ENCODE measurements at regions of chr4 and their contacts with region 1.

Region 1: DNA sequence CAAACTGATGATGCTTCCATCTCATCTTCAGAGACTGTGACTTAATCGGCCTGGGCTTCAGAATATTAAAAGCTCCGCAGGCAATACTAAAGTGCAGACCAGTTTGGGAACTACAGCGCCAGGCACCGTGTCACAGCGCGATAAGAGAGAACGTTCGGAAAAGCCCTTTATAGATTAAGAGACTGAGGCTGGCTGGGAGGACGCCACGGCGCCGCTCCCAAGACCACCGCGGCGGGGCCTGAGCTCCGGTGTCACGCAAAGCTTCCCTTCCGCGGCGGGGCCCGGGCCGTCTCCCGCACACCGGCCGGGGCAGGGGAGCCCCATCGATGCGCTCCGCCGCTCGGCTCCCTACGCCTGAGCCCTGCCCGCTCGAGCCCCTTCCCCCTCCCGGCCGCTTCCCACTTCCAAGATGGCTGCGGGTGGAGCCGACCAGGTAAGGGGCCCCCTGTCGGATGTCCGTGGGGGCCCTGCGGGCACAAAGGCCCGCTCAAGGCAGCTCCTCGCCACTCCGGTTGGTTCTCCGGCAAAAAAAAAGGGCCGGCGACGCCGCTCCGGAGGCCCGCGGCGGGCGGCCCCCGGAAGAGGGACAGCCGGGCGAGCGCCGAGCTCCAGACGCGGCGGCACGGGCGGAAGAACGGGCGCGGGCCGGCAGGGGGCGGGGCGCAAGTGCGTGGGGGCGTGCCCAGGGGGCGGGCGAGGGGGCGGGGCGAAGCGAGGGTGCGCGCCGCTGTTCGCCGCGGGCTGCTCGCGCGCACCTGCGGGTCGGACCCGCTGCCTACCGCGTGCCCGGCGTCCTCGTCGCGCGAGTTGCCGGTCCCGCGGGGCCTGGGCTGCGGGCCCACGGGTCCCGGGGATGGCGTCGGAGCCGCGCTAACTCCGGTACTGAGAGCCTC is at the start of gene TBC1D14:
- DNase-seq: peak; percentile 87
- H3K4me3 Mint-ChIP-seq: peak within 1 kb of the TSS; percentile 91
- H3K27ac Mint-ChIP-seq: peak within 1 kb of the TSS; percentile 77
- H3K4me1 Mint-ChIP-seq: peaks cover 29% of the 10 kb centered on the region
- H3K27me3 Mint-ChIP-seq: no peaks in the 10 kb centered on the region
- CTCF ChIP-seq: no peak
- total RNA-seq, gene TBC1D14: 52.6 and 55.1 TPM in 2 replicates

Region 2: GRCh38 chr4:6942238-6942800 is 33.0 kb after region 1 on chr4:
- CTCF ChIA-PET with region 1: interaction called, 6 read pairs
- POLR2A ChIA-PET with region 1: interaction called, 10 read pairs
- intact Hi-C with region 1: no loop called
- DNase-seq: peak; percentile 86
- H3K4me3 Mint-ChIP-seq: peak overlapping the region; percentile 49
- H3K27ac Mint-ChIP-seq: peak overlapping the region; percentile 95
- H3K4me1 Mint-ChIP-seq: peaks cover 32% of the 10 kb centered on the region
- H3K27me3 Mint-ChIP-seq: no peaks in the 10 kb centered on the region
- CTCF ChIP-seq: no peak

Measured in MCF 10A (cell line).